ENCODE measurements at regions of chr5 and their contacts with region 1.

Region 1: DNA sequence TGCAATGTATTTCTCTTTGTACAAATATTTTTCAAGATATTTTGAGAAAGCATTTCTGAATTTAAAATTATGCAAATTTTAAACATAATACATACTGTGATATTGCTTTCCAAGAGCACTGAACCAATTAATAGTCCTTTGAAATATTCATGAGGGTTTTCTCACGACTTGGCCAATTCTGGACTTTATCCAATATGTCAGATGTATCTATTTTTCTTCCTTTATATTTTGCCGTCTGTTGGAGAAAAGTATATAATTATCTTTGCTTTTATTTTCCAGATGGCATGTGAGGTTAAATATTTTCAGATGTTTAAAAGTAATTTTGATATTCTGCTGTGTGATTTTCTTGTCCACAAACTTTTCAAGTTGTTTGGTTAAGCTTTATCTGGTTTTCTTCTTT is 378.9 kb downstream of the SLCO4C1 start:
- DNase-seq: no peak
- H3K4me3 ChIP-seq: no peak overlapping the region
- H3K27ac ChIP-seq: no peak overlapping the region
- H3K4me1 ChIP-seq: no peaks in the 10 kb centered on the region
- H3K27me3 ChIP-seq: peaks cover 8% of the 10 kb centered on the region
- CTCF ChIP-seq: no peak

Region 2: GRCh38 chr5:101424530-101425175 is 492.5 kb before region 1 on chr5:
- CTCF ChIA-PET with region 1: no interaction called
- POLR2A ChIA-PET with region 1: no interaction called
- intact Hi-C with region 1: no loop called
- DNase-seq: no peak
- H3K4me3 ChIP-seq: no peak overlapping the region
- H3K27ac ChIP-seq: no peak overlapping the region
- H3K4me1 ChIP-seq: no peaks in the 10 kb centered on the region
- H3K27me3 ChIP-seq: no peaks in the 10 kb centered on the region
- CTCF ChIP-seq: no peak

Region 3: GRCh38 chr5:101783241-101784013 is 133.7 kb before region 1 on chr5:
- CTCF ChIA-PET with region 1: no interaction called
- POLR2A ChIA-PET with region 1: no interaction called
- intact Hi-C with region 1: no loop called
- DNase-seq: no peak
- H3K4me3 ChIP-seq: no peak overlapping the region
- H3K27ac ChIP-seq: no peak overlapping the region
- H3K4me1 ChIP-seq: no peaks in the 10 kb centered on the region
- H3K27me3 ChIP-seq: no peaks in the 10 kb centered on the region
- CTCF ChIP-seq: no peak

Region 4: GRCh38 chr5:101929628-101930027 is 12.5 kb after region 1 on chr5:
- CTCF ChIA-PET with region 1: no interaction called
- POLR2A ChIA-PET with region 1: no interaction called
- intact Hi-C with region 1: loop called (anchors 1 kb)
- DNase-seq: no peak
- H3K4me3 ChIP-seq: no peak overlapping the region
- H3K27ac ChIP-seq: no peak overlapping the region
- H3K4me1 ChIP-seq: no peaks in the 10 kb centered on the region
- H3K27me3 ChIP-seq: peaks cover 4% of the 10 kb centered on the region
- CTCF ChIP-seq: no peak

Region 5: DNA sequence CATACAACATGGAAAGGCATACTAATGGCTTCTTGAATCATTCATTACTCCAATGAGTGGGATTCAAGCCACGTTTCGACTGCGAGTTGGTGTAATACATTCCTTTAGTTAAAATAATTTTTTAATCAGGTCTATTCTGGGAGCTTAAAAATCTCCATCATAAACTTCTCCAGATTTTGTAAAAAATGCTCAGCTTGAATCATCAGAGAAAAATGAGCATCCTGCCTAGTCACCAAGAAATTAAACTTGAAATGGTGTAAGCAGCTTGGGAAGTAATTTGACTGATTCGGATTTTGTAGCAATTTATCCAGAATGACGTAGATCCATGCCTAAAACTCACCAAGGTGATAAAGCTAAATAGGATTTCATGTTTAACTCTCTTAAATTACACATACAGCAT is 213.2 kb after region 1 on chr5:
- CTCF ChIA-PET with region 1: no interaction called
- POLR2A ChIA-PET with region 1: no interaction called
- intact Hi-C with region 1: no loop called
- DNase-seq: no peak
- H3K4me3 ChIP-seq: no peak overlapping the region
- H3K27ac ChIP-seq: no peak overlapping the region
- H3K4me1 ChIP-seq: no peaks in the 10 kb centered on the region
- H3K27me3 ChIP-seq: peaks cover 9% of the 10 kb centered on the region
- CTCF ChIP-seq: no peak

Measured in A673 (cell line).